Activated CD8-positive, alpha-beta memory T cell treated with anti-CD3 and anti-CD28 coated beads, Interleukin-2, amount 10 ng/mL, durations not matched to agents 7 days and 5 days (primary cell): ENCODE measurements at regions of chr20 and their contacts with region 1.

Region 1: DNA sequence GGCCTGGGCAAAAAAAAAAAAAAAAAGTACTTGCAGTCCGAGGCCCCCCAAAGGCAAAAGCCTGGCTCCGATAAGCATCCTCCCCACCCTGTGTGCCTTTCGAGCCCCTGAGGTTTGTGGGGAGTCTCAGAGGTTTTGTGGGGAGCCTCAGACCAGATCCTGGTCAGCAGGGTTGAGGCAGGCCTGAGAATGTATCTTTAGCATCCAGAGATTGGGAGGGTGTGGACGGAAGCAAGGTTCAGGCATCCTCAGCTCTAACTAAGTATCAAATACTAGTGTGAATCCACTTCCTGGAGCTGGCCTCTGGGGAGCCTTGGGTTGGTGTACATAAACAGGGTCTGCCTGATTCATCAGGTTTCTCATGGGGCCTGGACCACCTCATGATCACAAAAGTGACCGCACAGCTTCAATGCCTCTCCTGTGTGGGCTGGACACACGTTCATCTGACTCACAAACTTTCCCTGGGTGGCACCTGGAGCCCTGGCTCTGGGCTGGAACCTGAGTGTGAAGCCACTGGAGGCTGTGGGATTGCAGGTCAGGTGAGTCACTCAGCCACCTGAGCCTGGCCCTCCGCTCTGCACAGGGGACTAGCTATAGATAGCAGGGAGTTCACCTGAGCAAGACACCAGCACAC is 24.4 kb downstream of the PCMTD2 start:
- DNase-seq: peak; percentile 73
- ATAC-seq: peak; percentile 82
- H3K4me3 Mint-ChIP-seq: no peak overlapping the region
- H3K27ac Mint-ChIP-seq: no peak overlapping the region
- H3K4me1 Mint-ChIP-seq: peaks cover 24% of the 10 kb centered on the region
- H3K27me3 Mint-ChIP-seq: peaks cover 11% of the 10 kb centered on the region

Region 2: GRCh38 chr20:64164123-64164836 is 115.7 kb before region 1 on chr20 and contains the start of gene MYT1:
- CTCF ChIA-PET with region 1: no interaction called
- DNase-seq: no peak
- ATAC-seq: no peak
- H3K4me3 Mint-ChIP-seq: no peak within 1 kb of the TSS
- H3K27ac Mint-ChIP-seq: no peak within 1 kb of the TSS
- H3K4me1 Mint-ChIP-seq: no peaks in the 10 kb centered on the region
- H3K27me3 Mint-ChIP-seq: peaks cover 39% of the 10 kb centered on the region
- total RNA-seq, gene MYT1: not detected

Region 3: DNA sequence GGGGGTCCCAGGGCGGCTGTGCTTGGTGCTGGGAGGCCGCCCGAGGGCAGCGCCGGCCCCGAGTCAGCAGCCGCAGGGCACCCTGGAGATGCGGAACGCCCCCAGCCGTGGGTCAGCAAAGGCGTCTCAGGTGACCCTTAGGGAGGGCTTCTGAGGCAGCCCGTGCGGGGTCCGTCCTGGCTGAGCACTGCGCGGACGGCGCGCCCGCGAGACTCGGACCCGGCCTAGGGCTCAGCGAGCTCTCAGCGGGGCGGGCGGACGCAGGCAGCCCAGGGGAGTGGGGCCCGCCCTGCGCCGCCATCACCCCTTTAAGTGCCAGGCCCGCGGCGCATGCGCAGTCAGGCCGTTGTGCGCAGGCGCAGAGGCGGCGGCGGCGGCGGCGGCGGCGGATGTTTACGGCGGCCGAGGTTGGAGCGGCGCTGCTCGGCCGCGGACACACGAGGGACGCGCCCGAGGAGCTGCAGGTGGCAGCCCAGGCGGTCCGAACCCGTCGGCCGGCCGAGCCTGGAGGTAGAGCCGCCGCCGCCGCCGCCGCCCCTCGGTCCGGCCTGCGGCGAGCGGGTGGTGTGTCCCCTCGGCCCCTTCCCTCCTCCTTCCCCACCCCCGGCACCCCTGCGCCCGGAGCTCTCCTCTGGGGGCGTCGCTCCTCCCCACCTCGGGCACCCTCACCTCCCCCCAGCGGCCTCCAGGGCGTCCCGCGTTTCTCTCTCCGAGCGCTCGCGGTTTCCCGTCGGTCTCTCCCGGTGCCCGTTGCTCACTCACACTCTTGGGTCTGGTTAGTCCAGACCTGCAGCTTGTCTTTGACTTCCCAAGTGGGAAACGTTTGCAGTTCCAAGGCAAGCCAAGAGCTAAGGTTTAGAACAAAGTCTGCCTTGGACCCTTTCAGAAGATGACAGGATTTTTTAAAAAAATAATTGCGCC is 24.3 kb before region 1 on chr20 and contains the start of gene PCMTD2:
- CTCF ChIA-PET with region 1: interaction called, 19 read pairs
- DNase-seq: peak; percentile 88
- ATAC-seq: peak; percentile 96
- H3K4me3 Mint-ChIP-seq: peak within 1 kb of the TSS; percentile 79
- H3K27ac Mint-ChIP-seq: peak within 1 kb of the TSS; percentile 82
- H3K4me1 Mint-ChIP-seq: peaks cover 32% of the 10 kb centered on the region
- H3K27me3 Mint-ChIP-seq: peaks cover 7% of the 10 kb centered on the region
- total RNA-seq, gene PCMTD2: 28.1 to 38.5 TPM

Region 4: DNA sequence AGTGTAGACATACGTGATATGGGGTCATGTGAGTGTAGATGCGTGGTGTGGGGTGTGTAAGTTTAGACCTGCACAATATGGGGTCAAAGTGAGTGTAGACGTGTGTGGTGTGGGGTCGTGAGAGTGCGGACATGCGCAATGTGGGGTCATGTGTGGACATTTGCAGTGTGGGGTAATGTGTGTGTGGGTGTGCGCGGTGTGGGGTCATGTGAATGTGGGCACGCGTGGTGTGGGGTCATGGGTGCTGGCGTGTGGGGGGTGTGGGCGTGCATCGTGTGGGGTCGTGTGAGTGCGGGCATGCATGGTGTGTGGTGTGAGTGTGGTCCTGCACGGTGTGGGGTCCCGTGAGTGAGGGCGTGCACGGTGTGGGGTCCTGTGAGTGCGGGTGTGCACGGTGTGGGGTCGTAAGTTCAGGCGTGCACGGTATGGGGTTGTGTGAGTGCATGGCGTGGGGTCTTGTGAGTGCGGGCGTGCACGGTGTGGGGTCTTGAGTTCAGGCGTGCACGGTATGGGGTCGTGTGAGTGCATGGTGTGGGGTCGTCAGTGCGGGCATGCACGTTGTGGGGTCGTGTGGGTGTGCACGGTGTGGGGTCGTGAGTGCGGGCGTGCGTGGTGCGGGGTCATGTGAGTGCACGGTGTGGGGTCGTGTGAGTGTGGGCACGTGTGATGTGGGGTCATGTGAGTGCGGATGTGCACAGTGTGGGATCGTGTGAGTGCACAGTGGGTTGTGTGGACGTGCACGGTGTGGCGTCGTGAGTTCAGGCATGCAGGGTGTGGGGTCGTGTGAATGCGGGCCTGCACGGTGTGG is 10.1 kb before region 1 on chr20:
- CTCF ChIA-PET with region 1: no interaction called
- DNase-seq: no peak
- ATAC-seq: no peak
- H3K4me3 Mint-ChIP-seq: no peak overlapping the region
- H3K27ac Mint-ChIP-seq: no peak overlapping the region
- H3K4me1 Mint-ChIP-seq: no peaks in the 10 kb centered on the region
- H3K27me3 Mint-ChIP-seq: no peaks in the 10 kb centered on the region